PC-3 (cell line): ENCODE measurements at regions of chr10 and their contacts with region 1.

Region 1: DNA sequence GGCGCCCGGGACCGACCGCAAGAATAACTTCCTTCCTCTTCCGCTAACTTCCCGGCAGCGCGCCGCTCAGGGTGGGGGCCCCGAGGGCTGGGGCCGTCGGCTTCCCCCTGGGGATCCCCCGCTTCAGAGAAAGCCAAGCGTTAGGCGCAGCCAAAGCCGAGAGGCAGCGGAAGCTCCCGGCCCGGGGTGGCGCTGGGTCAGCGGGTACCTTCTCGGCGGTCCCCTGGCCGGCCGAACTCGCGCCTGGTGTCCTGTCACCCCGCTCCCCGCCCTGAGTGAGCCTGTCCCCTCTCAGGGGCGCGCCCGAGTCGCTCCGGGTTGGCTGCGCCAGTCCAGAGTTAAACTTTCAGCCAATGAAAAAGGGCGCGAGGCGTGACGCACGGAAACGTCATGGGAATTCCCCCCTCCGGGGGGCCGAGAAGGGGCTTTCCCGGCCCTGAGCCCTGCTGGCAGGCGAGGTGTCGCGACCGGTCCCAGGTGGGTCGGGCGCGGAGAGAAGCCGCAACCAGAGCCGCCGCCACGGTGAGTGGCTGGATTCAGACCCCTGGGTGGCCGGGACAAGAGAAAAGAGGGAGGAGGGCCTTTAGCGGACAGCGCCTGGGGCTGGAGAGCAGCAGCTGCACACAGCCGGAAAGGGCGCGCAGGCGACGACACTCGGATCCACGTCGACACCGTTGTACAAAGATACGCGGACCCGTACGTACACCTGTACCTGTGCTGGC is 1.3 kb upstream of the NFKB2 start:
- DNase-seq: peak; percentile 87
- ATAC-seq: peak; percentile 83
- H3K4me3 ChIP-seq: peak overlapping the region; percentile 79
- H3K27ac ChIP-seq: peak overlapping the region; percentile 87
- H3K4me1 ChIP-seq: peaks cover 12% of the 10 kb centered on the region; the same call in 1 of the 2 replicates
- H3K27me3 ChIP-seq: no peaks in the 10 kb centered on the region
- CTCF ChIP-seq: peak; percentile 7; the same call in 1 of the 2 replicates

Region 2: DNA sequence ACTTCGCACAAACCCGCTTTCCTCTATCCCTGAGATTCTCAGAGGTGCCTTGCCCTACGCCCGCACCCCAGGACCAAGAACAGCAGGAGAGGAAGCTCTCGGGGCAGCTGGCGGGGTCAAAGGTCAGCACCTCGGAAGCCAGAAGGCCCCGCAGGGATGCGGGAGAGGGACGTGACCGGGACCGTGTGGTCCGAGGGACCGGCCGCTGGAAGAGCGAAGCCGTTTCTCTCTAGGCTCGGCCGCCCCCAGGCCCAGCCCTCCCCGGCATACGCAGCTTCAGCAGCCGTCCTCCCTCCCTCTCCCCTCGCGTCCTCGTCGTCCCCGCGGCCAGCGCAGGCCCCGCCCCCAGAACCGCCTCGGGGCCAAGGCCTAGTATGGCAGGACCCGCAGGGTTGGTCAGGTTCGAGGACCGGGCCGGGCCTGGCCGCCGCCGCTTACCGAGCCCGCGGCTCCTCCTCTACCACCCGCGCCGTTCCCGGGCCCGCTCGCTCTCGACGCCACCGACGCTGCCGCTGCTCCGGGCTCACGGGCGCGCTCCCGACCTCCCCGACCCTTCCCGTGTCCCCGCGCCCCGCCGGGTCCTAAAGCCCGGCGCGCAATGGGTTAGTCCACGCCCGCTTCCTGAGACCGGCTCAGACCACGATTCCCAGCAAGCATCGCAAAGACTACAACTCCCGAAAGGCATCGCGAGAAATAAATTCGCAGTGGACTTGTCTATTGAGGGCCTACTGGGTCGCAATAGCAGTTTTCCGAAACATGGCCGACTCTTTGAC is 338.4 kb before region 1 on chr10 and contains the start of gene ARMH3:
- CTCF ChIA-PET with region 1: no interaction called
- POLR2A ChIA-PET with region 1: interaction called, 10 read pairs
- intact Hi-C with region 1: no loop called
- DNase-seq: peak; percentile 94
- ATAC-seq: peak; percentile 97
- H3K4me3 ChIP-seq: peak within 1 kb of the TSS; percentile 97
- H3K27ac ChIP-seq: peak within 1 kb of the TSS; percentile 34
- H3K4me1 ChIP-seq: no peaks in the 10 kb centered on the region
- H3K27me3 ChIP-seq: no peaks in the 10 kb centered on the region
- CTCF ChIP-seq: no peak
- total RNA-seq, gene ARMH3: 7.8 and 9.7 TPM in 2 replicates

Region 3: DNA sequence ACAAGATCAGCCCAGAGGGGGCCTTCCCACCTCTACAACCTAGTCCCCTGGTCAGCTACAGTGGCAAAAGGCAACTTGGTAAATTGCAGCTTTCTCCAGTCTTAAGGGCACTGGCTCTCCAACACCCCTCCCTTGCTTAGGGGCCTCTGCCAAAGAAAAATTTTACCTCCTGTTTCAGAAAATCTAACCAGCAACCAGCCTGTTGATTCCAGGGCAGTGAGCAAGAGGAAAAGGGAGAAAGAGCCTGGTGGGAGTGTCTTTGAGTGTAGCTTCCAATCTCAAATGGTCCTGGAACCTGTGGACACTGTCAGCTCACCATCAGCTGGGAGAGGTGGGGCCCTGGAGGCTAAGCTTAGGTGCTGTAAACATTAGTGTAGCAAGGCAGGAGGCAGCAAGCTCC is 85.4 kb after region 1 on chr10:
- CTCF ChIA-PET with region 1: no interaction called
- POLR2A ChIA-PET with region 1: no interaction called
- intact Hi-C with region 1: loop called (anchors 2 kb)
- DNase-seq: no peak
- ATAC-seq: no peak
- H3K4me3 ChIP-seq: no peak overlapping the region
- H3K27ac ChIP-seq: no peak overlapping the region
- H3K4me1 ChIP-seq: no peaks in the 10 kb centered on the region
- H3K27me3 ChIP-seq: no peaks in the 10 kb centered on the region
- CTCF ChIP-seq: no peak

Region 4: DNA sequence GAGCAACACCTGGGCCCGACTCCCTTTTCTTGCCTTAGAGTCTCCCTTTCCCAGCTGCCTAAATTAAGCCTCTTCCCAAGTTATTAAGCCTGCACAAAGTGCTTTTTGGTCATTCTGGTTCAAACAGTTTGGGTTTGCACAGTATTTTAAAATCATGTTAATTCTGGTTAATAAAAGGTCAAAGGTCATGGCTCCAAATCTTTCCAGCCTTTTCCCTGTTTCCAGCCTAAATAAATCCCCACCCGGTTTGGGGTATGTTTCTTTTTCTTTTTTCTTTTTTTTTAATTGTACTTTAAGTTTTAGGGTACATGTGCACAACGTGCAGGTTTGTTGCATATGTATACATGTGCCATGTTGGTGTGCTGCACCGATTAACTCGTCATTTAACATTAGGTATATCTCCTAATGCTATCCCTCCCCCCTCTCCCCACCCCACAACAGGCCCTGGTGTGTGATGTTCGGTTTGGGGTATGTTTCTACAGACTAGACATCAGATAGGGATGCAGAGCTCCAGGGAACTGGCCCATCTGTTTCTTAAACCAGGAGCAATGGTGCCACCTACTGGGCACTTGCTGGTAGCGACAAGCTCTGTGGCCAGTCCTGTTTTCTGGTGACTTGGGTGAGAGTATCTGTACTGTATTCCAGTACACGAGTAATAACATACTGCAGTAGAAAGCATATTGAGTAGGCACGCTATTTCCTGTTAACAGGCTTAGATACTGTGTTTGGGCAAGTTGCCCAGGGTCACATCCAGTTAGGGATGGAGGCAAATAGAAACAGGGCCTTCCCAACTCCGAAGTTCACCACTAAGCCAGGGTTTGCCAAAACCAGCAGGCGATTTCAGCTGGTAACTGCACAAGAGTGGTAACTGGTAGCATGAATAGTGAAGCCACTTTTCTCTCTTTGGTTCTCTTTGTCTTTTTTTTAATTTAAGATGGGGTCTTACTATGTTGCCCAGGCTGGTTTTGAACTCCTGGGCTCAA is 189.5 kb after region 1 on chr10:
- CTCF ChIA-PET with region 1: no interaction called
- POLR2A ChIA-PET with region 1: no interaction called
- intact Hi-C with region 1: no loop called
- DNase-seq: peak; percentile 86
- ATAC-seq: peak; percentile 97
- H3K4me3 ChIP-seq: no peak overlapping the region
- H3K27ac ChIP-seq: no peak overlapping the region
- H3K4me1 ChIP-seq: no peaks in the 10 kb centered on the region
- H3K27me3 ChIP-seq: no peaks in the 10 kb centered on the region
- CTCF ChIP-seq: peak; percentile 74